HEK293T (cell line): ENCODE measurements at regions of chr11 and their contacts with region 1.

Region 1: GRCh38 chr11:33736148-33736809 is at the start of gene CD59:
- DNase-seq: peak; percentile 95

Region 2: DNA sequence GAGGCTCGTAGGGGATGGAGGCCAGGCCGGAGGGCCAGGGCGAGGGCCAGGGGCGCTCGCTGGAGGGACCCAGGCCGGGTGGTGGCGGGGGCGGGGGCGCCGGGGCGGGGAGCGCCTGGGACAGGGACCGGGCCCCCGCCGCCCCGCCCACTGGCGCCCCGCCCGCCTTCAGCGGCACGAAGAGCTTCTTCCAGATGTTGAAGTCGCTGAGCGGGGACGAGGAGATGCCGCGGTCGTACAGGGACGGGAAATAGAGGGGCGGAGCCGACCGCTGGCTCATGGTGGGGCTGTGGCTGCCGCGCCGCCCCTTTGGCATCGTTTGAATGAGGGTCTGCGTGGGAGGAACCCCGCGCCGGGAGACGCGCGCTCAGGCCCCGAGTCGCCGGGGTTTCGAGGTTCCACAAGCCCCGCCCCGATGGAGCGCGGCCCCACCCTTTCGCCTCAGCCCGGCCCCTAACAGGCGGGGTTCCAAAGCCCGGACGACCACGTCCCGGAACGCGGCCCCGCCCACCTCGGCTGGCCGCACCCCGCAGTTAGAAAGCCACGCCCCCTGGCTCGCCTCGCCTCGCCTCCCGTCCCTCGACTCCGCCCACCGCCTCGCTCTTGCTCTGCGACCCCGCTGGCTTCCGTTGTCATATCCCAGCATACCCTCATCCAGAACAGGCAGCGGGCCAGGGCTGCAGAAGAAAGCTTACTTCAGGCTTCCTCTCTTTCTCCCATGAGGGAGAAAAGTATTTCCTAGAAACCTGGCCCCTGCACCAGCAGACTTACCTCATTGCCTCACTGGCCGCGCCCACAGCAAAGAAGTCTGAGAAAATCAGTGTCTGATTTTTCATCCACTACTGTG is 35.6 kb before region 1 on chr11 and contains the start of gene C11orf91:
- CTCF ChIA-PET with region 1: no interaction called
- POLR2A ChIA-PET with region 1: interaction called, 15 read pairs
- DNase-seq: peak; percentile 95

Region 3: DNA sequence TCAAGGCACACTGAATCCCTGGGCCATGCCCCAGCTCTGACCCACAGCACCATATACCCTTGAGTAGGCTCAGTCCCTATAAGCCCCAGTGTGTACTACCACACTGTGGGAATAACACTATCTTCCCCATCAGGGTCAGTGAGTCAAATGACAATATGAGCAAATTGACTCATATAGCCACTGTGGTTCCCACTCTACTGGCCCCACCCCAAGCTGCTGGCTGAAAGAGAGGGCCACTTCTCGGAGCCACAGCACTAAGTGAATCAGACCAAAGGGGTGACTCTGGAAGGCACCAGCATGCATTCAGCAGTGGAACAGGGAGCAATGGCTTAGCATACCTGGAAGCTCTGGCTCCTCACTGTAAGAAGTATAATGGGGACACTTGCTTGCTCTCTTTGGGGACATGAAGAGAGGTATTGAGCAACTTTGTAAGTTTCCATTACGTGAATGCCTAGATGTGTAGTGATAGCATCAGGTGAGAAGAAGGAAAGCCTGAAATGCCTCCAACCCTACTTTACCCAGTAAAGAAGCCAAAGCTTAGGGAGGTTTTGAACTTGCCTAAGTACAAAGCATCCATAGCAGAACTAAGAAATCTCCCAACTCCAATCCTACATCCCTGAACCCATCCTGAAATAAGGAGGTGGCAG is 13.6 kb before region 1 on chr11:
- CTCF ChIA-PET with region 1: no interaction called
- POLR2A ChIA-PET with region 1: interaction called, 12 read pairs
- DNase-seq: no peak